ENCODE measurements at regions of chr22 and their contacts with region 1.

Region 1: GRCh38 chr22:24951942-24952836 is at the start of gene KIAA1671:
- DNase-seq: peak; percentile 57 to 94 (median 86)
- ATAC-seq: peak; percentile 97
- H3K4me3 ChIP-seq: peak within 1 kb of the TSS; percentile 71 to 73
- H3K27ac ChIP-seq: peak within 1 kb of the TSS; percentile 70 to 81
- H3K4me1 ChIP-seq: peaks cover 4 to 15% of the 10 kb centered on the region in 2 donors
- H3K27me3 ChIP-seq: peaks cover 10 to 56% of the 10 kb centered on the region in 2 donors
- CTCF ChIP-seq: peak; percentile 84 to 94
- polyA plus RNA-seq, gene KIAA1671: 19.4 to 24.4 (median 23.0) TPM

Region 2: GRCh38 chr22:25057013-25057881 is 105.1 kb after region 1 on chr22:
- intact Hi-C with region 1: loop called in 1 of 2 experiments (anchors 10 kb)
- DNase-seq: peak in 3 of 4 donors; percentile 47 to 89 (median 49)
- ATAC-seq: peak; percentile 91
- H3K4me3 ChIP-seq: no peak overlapping the region
- H3K27ac ChIP-seq: no peak overlapping the region
- H3K4me1 ChIP-seq: no peaks in the 10 kb centered on the region
- H3K27me3 ChIP-seq: no peaks in the 10 kb centered on the region
- CTCF ChIP-seq: peak; percentile 78 to 82